Activated CD4-positive, alpha-beta T cell treated with anti-CD3 and anti-CD28 coated beads, Interleukin-2, amount 10 ng/mL, durations not matched to agents 24 days and 14 days (primary cell): ENCODE measurements at regions of chr10 and their contacts with region 1.

Region 1: DNA sequence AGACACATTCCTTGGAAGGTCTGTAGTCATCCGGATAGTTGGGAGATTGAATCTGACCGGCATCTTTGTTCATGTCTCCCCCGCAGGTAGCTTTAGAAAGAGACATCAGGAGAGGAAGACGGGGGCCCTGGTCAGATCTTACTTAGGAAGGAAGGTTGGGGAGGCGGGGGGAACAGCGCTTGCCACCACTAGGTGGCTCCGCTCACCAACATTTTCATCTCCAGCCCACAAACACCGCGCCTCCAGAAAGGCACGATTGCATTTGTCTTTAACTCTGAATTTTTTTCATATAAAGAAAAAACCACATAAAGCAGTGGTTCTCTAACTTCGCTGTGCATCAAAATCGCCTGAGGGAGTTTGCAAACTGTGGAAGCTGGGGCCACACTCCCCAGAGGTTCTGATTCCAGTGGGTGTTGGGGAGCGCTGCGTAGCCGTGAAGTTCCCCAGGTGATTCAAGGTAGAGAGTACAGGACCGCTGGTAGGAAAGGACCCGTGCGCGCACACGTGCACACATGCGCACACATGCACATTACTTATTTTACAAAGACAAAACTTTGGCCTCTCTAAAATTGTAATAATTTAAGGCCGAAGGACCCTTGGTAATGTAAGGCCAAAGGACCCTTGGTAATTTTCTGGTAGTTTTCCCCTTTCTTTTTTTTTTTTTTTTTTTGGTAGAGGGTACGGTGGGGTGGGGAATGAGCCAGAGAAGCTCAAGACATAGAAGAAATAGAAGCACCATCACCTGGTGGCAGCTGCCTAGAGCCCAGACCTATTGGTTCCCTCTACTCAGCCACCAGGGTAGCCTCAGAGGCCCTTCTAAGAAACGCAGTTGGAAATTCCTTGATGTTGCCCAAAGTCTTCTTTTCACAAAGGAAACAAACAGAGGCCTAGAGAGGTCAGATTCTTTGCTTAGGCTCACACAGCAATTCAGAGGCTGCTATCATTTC is 37.4 kb upstream of the OPALIN start:
- DNase-seq: peak; percentile 84
- H3K4me3 Mint-ChIP-seq: no peak overlapping the region
- H3K27ac Mint-ChIP-seq: no peak overlapping the region
- H3K4me1 Mint-ChIP-seq: peaks cover 2% of the 10 kb centered on the region
- H3K27me3 Mint-ChIP-seq: peaks cover 28% of the 10 kb centered on the region

Region 2: GRCh38 chr10:96374985-96375830 is 21.0 kb before region 1 on chr10:
- intact Hi-C with region 1: no loop called
- DNase-seq: peak; percentile 93
- H3K4me3 Mint-ChIP-seq: peak overlapping the region; percentile 83
- H3K27ac Mint-ChIP-seq: no peak overlapping the region
- H3K4me1 Mint-ChIP-seq: peaks cover 10% of the 10 kb centered on the region
- H3K27me3 Mint-ChIP-seq: peaks cover 8% of the 10 kb centered on the region

Region 3: GRCh38 chr10:96513698-96514561 is 117.7 kb after region 1 on chr10 and contains the start of gene TLL2:
- intact Hi-C with region 1: loop called (anchors 5 kb)
- DNase-seq: peak; percentile 89
- H3K4me3 Mint-ChIP-seq: peak within 1 kb of the TSS; percentile 76
- H3K27ac Mint-ChIP-seq: no peak within 1 kb of the TSS
- H3K4me1 Mint-ChIP-seq: peaks cover 13% of the 10 kb centered on the region
- H3K27me3 Mint-ChIP-seq: peaks cover 62% of the 10 kb centered on the region
- total RNA-seq, gene TLL2: not detected in 2 replicates

Region 4: GRCh38 chr10:97210543-97210961 is 814.3 kb after region 1 on chr10:
- intact Hi-C with region 1: loop called (anchors 5 kb)
- DNase-seq: peak; percentile 91
- H3K4me3 Mint-ChIP-seq: no peak overlapping the region
- H3K27ac Mint-ChIP-seq: no peak overlapping the region
- H3K4me1 Mint-ChIP-seq: no peaks in the 10 kb centered on the region
- H3K27me3 Mint-ChIP-seq: no peaks in the 10 kb centered on the region